Posterior cingulate gyrus (tissue), 11 donors: ENCODE measurements at regions of chr2 and their contacts with region 1.

Region 1: GRCh38 chr2:239927424-239927981 is 97.6 kb downstream of the NDUFA10 start:
- DNase-seq: peak in 7 of 10 donors; percentile 9 to 80 (median 49)

Region 2: GRCh38 chr2:239369631-239370161 is 557.8 kb before region 1 on chr2:
- intact Hi-C with region 1: loop called (anchors 10 kb)
- DNase-seq: peak in 4 of 10 donors; percentile 37 to 89 (median 52)

Region 3: GRCh38 chr2:239735131-239735828 is 192.2 kb before region 1 on chr2:
- intact Hi-C with region 1: loop called (anchors 10 kb)
- DNase-seq: peak in 8 of 10 donors; percentile 49 to 96 (median 74)